ENCODE measurements at regions of chr5 and their contacts with region 1.

Region 1: GRCh38 chr5:92909602-92909962 is 671.4 kb downstream of the NR2F1-AS1 start:
- DNase-seq: peak in 1 of 2 experiments; percentile 32
- H3K4me3 ChIP-seq: no peak overlapping the region
- H3K4me3 Mint-ChIP-seq: no peak overlapping the region
- H3K27ac Mint-ChIP-seq: no peak overlapping the region
- H3K4me1 ChIP-seq: 0 out of 2 replicates have a peak, but pooled peaks cover 4% of the 10 kb centered on the region
- H3K4me1 Mint-ChIP-seq: no peaks in the 10 kb centered on the region
- H3K27me3 ChIP-seq: no peaks in the 10 kb centered on the region
- H3K27me3 Mint-ChIP-seq: peaks cover 3% of the 10 kb centered on the region
- CTCF ChIP-seq: peak; percentile 72 to 79

Region 2: DNA sequence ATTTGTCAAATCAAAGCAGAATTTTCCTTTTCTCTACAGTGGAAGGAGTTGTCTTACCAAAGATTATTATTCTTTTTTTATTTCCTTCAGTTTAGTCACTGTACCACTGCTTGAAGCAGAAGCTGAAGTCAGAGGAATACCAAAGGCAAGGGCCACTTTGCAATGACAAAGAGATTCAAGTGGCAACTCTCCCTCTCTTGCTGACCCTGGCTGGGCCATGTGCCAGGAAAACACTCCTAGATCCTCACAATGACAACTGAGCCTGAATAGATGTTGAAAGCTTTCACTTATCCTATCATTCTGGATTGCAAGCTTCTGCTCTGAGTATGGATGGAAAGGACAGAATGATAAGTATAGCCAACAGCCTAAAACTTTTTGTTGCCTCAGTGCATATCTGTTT is 53.2 kb after region 1 on chr5:
- CTCF ChIA-PET with region 1: no interaction called
- POLR2A ChIA-PET with region 1: no interaction called
- intact Hi-C with region 1: no loop called
- DNase-seq: no peak
- H3K4me3 ChIP-seq: no peak overlapping the region
- H3K4me3 Mint-ChIP-seq: no peak overlapping the region
- H3K27ac Mint-ChIP-seq: no peak overlapping the region
- H3K4me1 ChIP-seq: no peaks in the 10 kb centered on the region
- H3K4me1 Mint-ChIP-seq: no peaks in the 10 kb centered on the region
- H3K27me3 ChIP-seq: no peaks in the 10 kb centered on the region
- H3K27me3 Mint-ChIP-seq: no peaks in the 10 kb centered on the region
- CTCF ChIP-seq: no peak

Region 3: GRCh38 chr5:93062548-93062947 is 153.0 kb after region 1 on chr5:
- CTCF ChIA-PET with region 1: no interaction called
- POLR2A ChIA-PET with region 1: no interaction called
- intact Hi-C with region 1: loop called (anchors 1 kb)
- DNase-seq: peak in 1 of 2 experiments; percentile 22
- H3K4me3 ChIP-seq: no peak overlapping the region
- H3K4me3 Mint-ChIP-seq: no peak overlapping the region
- H3K27ac Mint-ChIP-seq: no peak overlapping the region
- H3K4me1 ChIP-seq: no peaks in the 10 kb centered on the region
- H3K4me1 Mint-ChIP-seq: no peaks in the 10 kb centered on the region
- H3K27me3 ChIP-seq: no peaks in the 10 kb centered on the region
- H3K27me3 Mint-ChIP-seq: no peaks in the 10 kb centered on the region
- CTCF ChIP-seq: peak; percentile 27 to 55

Region 4: GRCh38 chr5:93164690-93165089 is 255.1 kb after region 1 on chr5:
- CTCF ChIA-PET with region 1: no interaction called
- POLR2A ChIA-PET with region 1: no interaction called
- intact Hi-C with region 1: no loop called
- DNase-seq: no peak
- H3K4me3 ChIP-seq: no peak overlapping the region
- H3K4me3 Mint-ChIP-seq: no peak overlapping the region
- H3K27ac Mint-ChIP-seq: no peak overlapping the region
- H3K4me1 ChIP-seq: no peaks in the 10 kb centered on the region
- H3K4me1 Mint-ChIP-seq: no peaks in the 10 kb centered on the region
- H3K27me3 ChIP-seq: no peaks in the 10 kb centered on the region
- H3K27me3 Mint-ChIP-seq: no peaks in the 10 kb centered on the region
- CTCF ChIP-seq: no peak

Region 5: GRCh38 chr5:93249651-93250289 is 340.2 kb after region 1 on chr5:
- CTCF ChIA-PET with region 1: no interaction called
- POLR2A ChIA-PET with region 1: no interaction called
- intact Hi-C with region 1: loop called (anchors 1 kb)
- DNase-seq: no peak
- H3K4me3 ChIP-seq: no peak overlapping the region
- H3K4me3 Mint-ChIP-seq: no peak overlapping the region
- H3K27ac Mint-ChIP-seq: no peak overlapping the region
- H3K4me1 ChIP-seq: no peaks in the 10 kb centered on the region
- H3K4me1 Mint-ChIP-seq: no peaks in the 10 kb centered on the region
- H3K27me3 ChIP-seq: no peaks in the 10 kb centered on the region
- H3K27me3 Mint-ChIP-seq: no peaks in the 10 kb centered on the region
- CTCF ChIP-seq: no peak

Measured in Caco-2 (cell line).